ENCODE measurements at regions of chr6 and their contacts with region 1.

Region 1: GRCh38 chr6:25601800-25602673 is 50.0 kb upstream of the SCGN start:
- DNase-seq: peak in 4 of 5 donors; percentile 35 to 46 (median 40)
- H3K4me3 ChIP-seq: no peak overlapping the region
- H3K4me3 Mint-ChIP-seq: no peak overlapping the region
- H3K27ac ChIP-seq: no peak overlapping the region
- H3K27ac Mint-ChIP-seq: no peak overlapping the region
- H3K4me1 ChIP-seq: no peaks in the 10 kb centered on the region
- H3K4me1 Mint-ChIP-seq: peaks cover 0 to 1% (median 0%) of the 10 kb centered on the region in 4 donors
- H3K27me3 ChIP-seq: no peaks in the 10 kb centered on the region
- H3K27me3 Mint-ChIP-seq: no peaks in the 10 kb centered on the region

Region 2: GRCh38 chr6:25590986-25591385 is 11.1 kb before region 1 on chr6:
- CTCF ChIA-PET with region 1: interaction called, 28 read pairs
- POLR2A ChIA-PET with region 1: no interaction called
- intact Hi-C with region 1: no loop called
- DNase-seq: no peak
- H3K4me3 ChIP-seq: no peak overlapping the region
- H3K4me3 Mint-ChIP-seq: no peak overlapping the region
- H3K27ac ChIP-seq: no peak overlapping the region
- H3K27ac Mint-ChIP-seq: peak overlapping the region in 1 of 7 donors; percentile 69
- H3K4me1 ChIP-seq: no peaks in the 10 kb centered on the region
- H3K4me1 Mint-ChIP-seq: no peaks in the 10 kb centered on the region
- H3K27me3 ChIP-seq: no peaks in the 10 kb centered on the region
- H3K27me3 Mint-ChIP-seq: no peaks in the 10 kb centered on the region